AG04449 (cell line): ENCODE measurements at regions of chr10 and their contacts with region 1.

Region 1: GRCh38 chr10:71608819-71609768 is 110.5 kb downstream of the C10orf105 start:
- DNase-seq: no peak
- H3K4me3 ChIP-seq: no peak overlapping the region
- CTCF ChIP-seq: peak; percentile 86

Region 2: GRCh38 chr10:71597821-71598498 is 11.1 kb before region 1 on chr10:
- CTCF ChIA-PET with region 1: interaction called, 29 read pairs
- POLR2A ChIA-PET with region 1: no interaction called
- DNase-seq: no peak
- H3K4me3 ChIP-seq: no peak overlapping the region
- CTCF ChIP-seq: no peak

Region 3: GRCh38 chr10:71623098-71623985 is 14.2 kb after region 1 on chr10:
- CTCF ChIA-PET with region 1: interaction called, 84 read pairs
- POLR2A ChIA-PET with region 1: no interaction called
- DNase-seq: no peak
- H3K4me3 ChIP-seq: no peak overlapping the region
- CTCF ChIP-seq: peak; percentile 15

Region 4: GRCh38 chr10:71647526-71648253 is 38.6 kb after region 1 on chr10:
- CTCF ChIA-PET with region 1: no interaction called
- POLR2A ChIA-PET with region 1: no interaction called
- DNase-seq: no peak
- H3K4me3 ChIP-seq: no peak overlapping the region
- CTCF ChIP-seq: peak; percentile 26